ENCODE measurements at regions of chr16 and their contacts with region 1.

Region 1: DNA sequence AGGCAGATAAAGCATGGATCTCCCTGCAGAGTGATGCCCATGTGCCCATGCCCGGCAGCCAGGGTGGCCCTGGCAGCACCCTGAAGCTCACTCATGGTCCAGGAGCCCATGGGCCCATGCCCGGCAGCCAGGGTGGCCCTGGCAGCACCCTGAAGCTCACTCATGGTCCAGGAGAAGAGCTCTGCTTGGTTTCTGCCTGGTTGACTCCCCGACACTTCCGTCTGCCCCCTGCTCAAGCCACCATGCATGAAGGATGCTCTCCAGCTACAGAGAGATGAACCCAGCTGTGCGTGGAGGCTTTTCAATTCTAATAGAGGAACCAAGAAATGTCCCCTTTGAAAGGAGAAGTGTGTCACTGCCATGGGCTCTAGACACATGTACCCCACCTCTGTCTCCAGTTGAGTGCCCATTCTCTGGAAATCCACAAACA is 8.7 kb downstream of the CCL17 start:
- DNase-seq: peak in 1 of 9 experiments; percentile 22
- ATAC-seq: no peak
- H3K4me3 ChIP-seq: no peak overlapping the region
- H3K4me3 Mint-ChIP-seq: no peak overlapping the region
- H3K27ac ChIP-seq: no peak overlapping the region
- H3K27ac Mint-ChIP-seq: no peak overlapping the region
- H3K4me1 ChIP-seq: peaks cover 18% of the 10 kb centered on the region
- H3K4me1 Mint-ChIP-seq: peaks cover 9% of the 10 kb centered on the region
- H3K27me3 ChIP-seq: no peaks in the 10 kb centered on the region
- H3K27me3 Mint-ChIP-seq: peaks cover 4% of the 10 kb centered on the region
- CTCF ChIP-seq: no peak

Region 2: GRCh38 chr16:57432989-57433388 is 19.7 kb after region 1 on chr16:
- CTCF ChIA-PET with region 1: interaction called, 50 read pairs
- POLR2A ChIA-PET with region 1: interaction called, 3 read pairs
- intact Hi-C with region 1: no loop called
- DNase-seq: peak in 1 of 9 experiments; percentile 28
- ATAC-seq: peak; percentile 44
- H3K4me3 ChIP-seq: no peak overlapping the region
- H3K4me3 Mint-ChIP-seq: peak overlapping the region; percentile 49
- H3K27ac ChIP-seq: peak overlapping the region in 1 of 2 experiments; percentile 49
- H3K27ac Mint-ChIP-seq: peak overlapping the region; percentile 88
- H3K4me1 ChIP-seq: peaks cover 37% of the 10 kb centered on the region
- H3K4me1 Mint-ChIP-seq: peaks cover 38% of the 10 kb centered on the region
- H3K27me3 ChIP-seq: no peaks in the 10 kb centered on the region
- H3K27me3 Mint-ChIP-seq: no peaks in the 10 kb centered on the region
- CTCF ChIP-seq: no peak

Region 3: DNA sequence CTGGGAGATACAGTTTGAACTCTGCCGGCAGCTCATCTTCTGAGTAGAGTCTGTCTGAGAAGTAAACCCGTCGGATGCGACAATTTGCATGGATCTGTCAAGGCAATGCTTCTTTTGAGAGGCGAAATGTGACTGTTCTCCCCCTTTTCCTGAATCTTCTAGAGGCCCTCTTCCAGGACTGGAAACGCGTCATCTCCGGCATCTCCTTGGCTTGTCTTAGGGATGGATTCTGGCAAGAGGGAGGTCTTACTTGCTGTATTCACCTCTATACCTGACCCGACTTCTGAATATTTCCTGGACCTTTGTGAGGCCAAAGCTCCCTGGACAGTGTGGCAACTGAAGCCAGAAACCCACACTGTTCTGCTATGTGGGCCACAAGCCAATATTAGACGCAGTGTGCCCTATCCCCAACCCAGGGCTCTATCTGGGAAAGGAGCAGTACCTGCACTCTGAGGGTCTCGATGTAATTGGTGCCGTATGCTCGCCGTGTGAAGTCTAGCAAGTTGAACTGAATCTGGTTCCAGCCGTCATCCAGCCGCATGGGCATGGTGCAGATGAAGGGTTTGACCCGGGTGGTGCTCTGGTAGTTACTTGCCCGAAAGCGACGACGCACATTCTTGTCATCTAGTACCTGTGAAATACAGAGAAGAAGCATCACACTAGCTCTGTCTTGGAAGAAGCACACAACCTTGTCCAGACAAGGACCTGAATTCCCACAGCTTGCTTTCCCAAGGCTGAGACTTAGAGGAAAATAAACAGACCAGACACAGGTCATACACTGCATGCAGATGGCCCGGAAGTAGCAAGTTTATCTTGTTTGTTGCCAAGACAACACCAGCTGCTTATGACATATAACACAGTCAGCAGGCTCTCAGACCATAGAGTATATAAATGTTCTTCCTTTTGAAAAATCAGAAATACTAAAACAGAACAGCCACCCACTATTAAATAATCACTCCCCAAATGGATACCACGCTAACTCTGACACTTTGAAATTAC is 701.8 kb after region 1 on chr16:
- CTCF ChIA-PET with region 1: no interaction called
- POLR2A ChIA-PET with region 1: no interaction called
- intact Hi-C with region 1: no loop called
- DNase-seq: no peak
- ATAC-seq: no peak
- H3K4me3 ChIP-seq: no peak overlapping the region
- H3K4me3 Mint-ChIP-seq: no peak overlapping the region
- H3K27ac ChIP-seq: no peak overlapping the region
- H3K27ac Mint-ChIP-seq: no peak overlapping the region
- H3K4me1 ChIP-seq: no peaks in the 10 kb centered on the region
- H3K4me1 Mint-ChIP-seq: peaks cover 10% of the 10 kb centered on the region
- H3K27me3 ChIP-seq: no peaks in the 10 kb centered on the region
- H3K27me3 Mint-ChIP-seq: no peaks in the 10 kb centered on the region
- CTCF ChIP-seq: no peak

Measured in CD8-positive, alpha-beta T cell (primary cell).